Activated T-helper 1 cell treated with anti-CD3 and anti-CD28 coated beads, Interleukin-12 subunit alpha, Interleukin-12 subunit beta, Interleukin-2, Interleukin-4 antibody, amounts not matched to agents 30 ng/mL and 10 ng/mL and 1 ng/mL, durations not matched to agents 14 hours and 24 hours and 36 hours (primary cell): ENCODE measurements at regions of chr6 and their contacts with region 1.

Region 1: DNA sequence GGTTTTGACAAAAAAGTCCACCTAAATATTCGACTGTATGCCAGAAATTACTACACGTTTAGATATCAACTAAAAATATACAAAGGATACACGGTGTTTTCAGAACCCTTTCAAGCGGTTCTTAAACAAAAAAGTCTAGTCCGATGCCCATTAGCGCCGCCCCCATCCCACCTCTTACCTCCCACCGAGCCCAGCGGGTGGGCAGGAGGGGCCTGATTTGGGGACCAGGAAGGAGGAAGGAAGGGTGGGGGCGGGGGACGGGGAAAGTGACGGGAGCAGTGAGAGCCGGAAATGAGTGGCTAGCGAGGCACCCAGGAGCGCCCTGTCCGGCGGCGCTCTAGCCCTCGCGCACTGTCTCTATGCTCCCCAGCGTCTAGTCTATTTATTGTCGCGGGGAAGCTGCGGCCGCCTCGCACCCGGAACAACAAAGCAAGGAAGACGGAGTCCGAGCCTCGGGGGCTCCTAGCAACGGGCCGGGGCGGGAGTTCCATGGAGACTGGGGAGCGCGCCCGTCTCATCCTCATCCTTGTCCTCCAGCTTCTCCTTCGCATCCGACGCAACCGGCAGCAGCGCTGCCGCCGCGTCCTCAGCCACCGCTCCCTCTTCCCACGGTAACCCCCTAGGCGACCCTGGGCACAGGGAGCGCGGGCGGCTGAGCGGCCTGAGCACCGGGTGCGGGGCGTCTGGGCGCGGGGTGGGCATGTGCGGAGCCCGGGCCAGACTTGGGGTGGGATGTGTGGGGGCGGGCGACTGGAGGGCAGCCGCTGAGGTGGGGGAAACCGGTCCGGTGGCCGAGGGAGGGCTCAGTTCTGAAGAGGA is at the start of gene TBPL1:
- DNase-seq: peak; percentile 76
- H3K4me3 Mint-ChIP-seq: peak within 1 kb of the TSS; percentile 95
- H3K27ac Mint-ChIP-seq: peak within 1 kb of the TSS; percentile 90
- H3K4me1 Mint-ChIP-seq: peaks cover 48% of the 10 kb centered on the region
- H3K27me3 Mint-ChIP-seq: peaks cover 10% of the 10 kb centered on the region
- total RNA-seq, gene TBPL1: 40.5 and 42.2 TPM in 2 replicates

Region 2: DNA sequence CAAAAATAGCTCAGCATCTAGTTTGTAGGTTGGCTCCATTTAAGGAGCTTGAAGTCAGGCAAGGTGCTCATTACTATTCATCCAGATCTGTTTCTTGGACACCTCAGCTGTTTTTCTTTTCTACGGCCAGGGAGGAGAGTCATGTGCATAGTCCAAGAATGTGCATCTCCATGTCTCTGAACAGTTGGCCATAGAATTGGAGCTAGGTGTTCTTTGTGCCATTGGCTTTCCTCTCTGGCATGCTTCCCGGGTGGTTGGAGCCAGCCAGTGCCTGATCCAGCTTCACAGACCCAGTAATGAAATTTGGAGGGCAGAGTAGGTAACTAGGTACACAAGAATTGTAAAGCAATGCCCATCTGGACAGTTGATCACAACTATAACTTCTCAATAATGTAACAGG is 690.2 kb before region 1 on chr6:
- intact Hi-C with region 1: no loop called
- DNase-seq: no peak
- H3K4me3 Mint-ChIP-seq: no peak overlapping the region
- H3K27ac Mint-ChIP-seq: no peak overlapping the region
- H3K4me1 Mint-ChIP-seq: no peaks in the 10 kb centered on the region
- H3K27me3 Mint-ChIP-seq: no peaks in the 10 kb centered on the region

Region 3: DNA sequence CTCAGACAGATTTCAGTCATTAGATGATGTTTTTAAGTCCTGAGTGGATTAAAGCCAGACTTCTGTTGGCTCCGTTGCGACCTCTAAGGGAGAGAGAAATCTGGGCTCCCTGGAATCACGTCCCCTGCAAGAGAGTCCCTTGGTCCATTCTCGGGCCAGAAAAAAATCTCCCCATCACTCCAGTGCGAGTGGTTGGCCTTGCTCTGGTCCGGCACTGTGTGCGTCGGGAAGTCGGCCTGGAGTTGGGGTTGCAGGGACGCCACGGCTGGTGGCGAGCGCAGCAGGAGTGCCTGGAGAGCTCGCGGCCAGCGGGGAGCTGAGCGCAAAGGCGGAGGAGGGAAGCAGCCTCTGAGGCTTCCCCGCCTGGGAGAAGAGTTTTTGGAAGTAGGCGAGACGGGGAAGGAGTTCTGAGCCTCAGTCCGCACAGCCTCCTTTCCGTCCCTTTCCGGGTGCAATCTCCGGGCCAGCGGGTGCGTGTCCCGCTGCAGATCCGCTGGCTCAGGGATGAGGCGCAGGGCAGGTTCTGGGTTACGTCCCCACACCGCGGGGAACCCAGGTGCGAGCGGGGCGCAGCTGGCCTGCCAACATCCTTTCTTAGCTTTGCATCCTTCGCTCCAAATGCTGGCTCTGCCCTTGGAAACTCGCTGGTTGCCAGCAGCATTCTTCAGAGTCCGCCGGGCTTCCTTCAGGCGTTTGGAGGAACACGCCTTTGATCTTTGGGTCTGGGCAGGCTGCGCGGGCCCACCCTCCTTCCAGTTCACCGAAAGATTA is 57.3 kb before region 1 on chr6:
- intact Hi-C with region 1: no loop called
- DNase-seq: no peak
- H3K4me3 Mint-ChIP-seq: no peak overlapping the region
- H3K27ac Mint-ChIP-seq: no peak overlapping the region
- H3K4me1 Mint-ChIP-seq: peaks cover 6% of the 10 kb centered on the region
- H3K27me3 Mint-ChIP-seq: peaks cover 72% of the 10 kb centered on the region

Region 4: DNA sequence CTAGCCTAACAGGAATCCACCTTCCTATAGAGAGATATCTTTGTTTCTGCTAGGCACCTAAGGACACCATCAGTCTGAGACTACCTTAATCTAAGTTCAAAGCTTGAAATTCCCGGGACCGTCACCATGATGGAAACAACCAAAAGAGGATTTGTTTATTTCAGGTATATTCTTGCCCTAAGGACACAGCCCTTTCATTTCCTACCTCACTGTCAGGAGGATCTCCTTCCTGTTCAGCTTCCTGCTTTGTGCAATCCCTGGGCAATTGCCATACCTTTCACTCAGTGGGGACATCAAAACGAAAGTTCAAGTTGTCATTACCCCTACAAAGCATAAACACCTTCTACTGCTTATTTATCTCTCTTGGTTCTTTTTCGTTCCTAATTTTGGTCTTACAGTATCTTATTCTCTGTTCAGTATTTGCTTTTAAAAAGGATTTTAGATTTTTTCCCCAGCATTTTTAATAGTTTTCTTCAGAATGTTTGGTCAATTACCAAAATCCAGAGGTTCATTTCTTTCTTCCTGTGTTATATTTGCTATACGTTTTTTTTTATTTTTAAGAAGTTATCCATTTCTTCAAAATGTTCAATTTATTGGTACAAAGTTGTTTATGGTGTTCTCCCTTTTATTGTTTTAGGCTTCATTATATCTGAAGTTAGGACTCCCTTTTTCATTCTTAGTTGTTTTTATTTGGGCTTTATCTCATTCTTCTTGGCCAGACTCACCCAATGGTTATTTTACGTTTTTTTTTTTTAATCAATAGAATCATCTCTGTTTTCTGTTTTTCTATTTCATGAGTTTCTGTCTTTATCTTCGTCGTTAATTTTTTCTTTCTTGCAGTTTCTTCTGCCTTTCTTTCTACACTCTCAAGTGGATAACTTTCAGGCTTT is 13.0 kb before region 1 on chr6:
- intact Hi-C with region 1: no loop called
- DNase-seq: no peak
- H3K4me3 Mint-ChIP-seq: no peak overlapping the region
- H3K27ac Mint-ChIP-seq: no peak overlapping the region
- H3K4me1 Mint-ChIP-seq: no peaks in the 10 kb centered on the region
- H3K27me3 Mint-ChIP-seq: peaks cover 13% of the 10 kb centered on the region

Region 5: GRCh38 chr6:133983099-133983939 is 30.3 kb after region 1 on chr6:
- intact Hi-C with region 1: loop called (anchors 2 kb)
- DNase-seq: peak; percentile 22
- H3K4me3 Mint-ChIP-seq: no peak overlapping the region
- H3K27ac Mint-ChIP-seq: peak overlapping the region; percentile 19
- H3K4me1 Mint-ChIP-seq: peaks cover 37% of the 10 kb centered on the region
- H3K27me3 Mint-ChIP-seq: no peaks in the 10 kb centered on the region

Region 6: GRCh38 chr6:134047673-134048072 is 94.6 kb after region 1 on chr6:
- intact Hi-C with region 1: loop called (anchors 1 kb)
- DNase-seq: no peak
- H3K4me3 Mint-ChIP-seq: no peak overlapping the region
- H3K27ac Mint-ChIP-seq: no peak overlapping the region
- H3K4me1 Mint-ChIP-seq: peaks cover 9% of the 10 kb centered on the region
- H3K27me3 Mint-ChIP-seq: peaks cover 11% of the 10 kb centered on the region